ENCODE measurements at regions of chr1 and their contacts with region 1.

Region 1: DNA sequence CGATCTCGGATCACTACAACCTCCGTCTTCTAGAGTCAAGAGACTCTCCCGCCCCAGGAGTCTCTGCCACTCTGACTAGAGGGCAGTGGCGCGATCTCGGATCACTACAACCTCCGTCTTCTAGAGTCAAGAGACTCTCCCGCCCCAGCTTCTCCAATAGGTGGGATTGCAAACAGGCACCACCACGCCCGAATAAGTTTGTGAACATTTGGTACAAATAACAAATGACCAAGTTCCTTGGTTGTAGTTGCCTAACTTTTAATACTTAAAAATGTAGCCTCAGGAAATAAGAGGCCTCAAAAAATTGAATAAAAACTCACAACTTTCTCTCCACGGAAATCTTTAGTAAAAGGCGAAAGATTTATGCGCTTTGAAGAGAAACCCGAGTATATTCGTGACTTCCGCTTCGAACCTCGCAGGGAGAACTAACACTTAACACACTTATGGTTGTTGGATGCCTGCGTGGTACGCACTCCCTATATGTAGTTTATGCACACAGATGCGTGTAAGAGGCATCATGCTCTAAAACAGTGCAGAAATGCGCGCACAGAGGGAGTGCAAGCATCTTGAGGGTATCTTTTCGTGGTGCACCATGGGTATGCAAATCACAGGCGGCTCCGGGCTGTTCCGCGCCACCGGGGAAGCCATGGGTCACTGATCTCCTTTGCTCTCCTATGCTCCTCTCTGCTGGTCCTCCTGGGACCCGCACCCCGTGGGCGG is 11.4 kb downstream of the BTBD19 start:
- DNase-seq: peak; percentile 82
- H3K4me3 ChIP-seq: peak overlapping the region; percentile 5 to 62 (median 17)
- H3K27ac ChIP-seq: peak overlapping the region; percentile 91
- H3K4me1 ChIP-seq: peaks cover 10% of the 10 kb centered on the region
- H3K27me3 ChIP-seq: no peaks in the 10 kb centered on the region
- CTCF ChIP-seq: no peak
- POLR2A ChIP-seq: peak; percentile 100

Region 2: GRCh38 chr1:44730741-44731512 is 88.8 kb before region 1 on chr1 and contains the start of gene RNU5D-1:
- CTCF ChIA-PET with region 1: interaction called, 5 read pairs
- POLR2A ChIA-PET with region 1: interaction called, 6 read pairs
- dilution Hi-C with region 1: no loop called
- intact Hi-C with region 1: loop called (anchors 1 kb)
- DNase-seq: peak; percentile 97
- H3K4me3 ChIP-seq: no peak within 1 kb of the TSS
- H3K27ac ChIP-seq: peak within 1 kb of the TSS; percentile 89
- H3K4me1 ChIP-seq: peaks cover 2% of the 10 kb centered on the region
- H3K27me3 ChIP-seq: no peaks in the 10 kb centered on the region
- CTCF ChIP-seq: peak; percentile 77 to 84
- POLR2A ChIP-seq: peak; percentile 100
- total RNA-seq, gene RNU5D-1: not detected in 2 replicates

Region 3: DNA sequence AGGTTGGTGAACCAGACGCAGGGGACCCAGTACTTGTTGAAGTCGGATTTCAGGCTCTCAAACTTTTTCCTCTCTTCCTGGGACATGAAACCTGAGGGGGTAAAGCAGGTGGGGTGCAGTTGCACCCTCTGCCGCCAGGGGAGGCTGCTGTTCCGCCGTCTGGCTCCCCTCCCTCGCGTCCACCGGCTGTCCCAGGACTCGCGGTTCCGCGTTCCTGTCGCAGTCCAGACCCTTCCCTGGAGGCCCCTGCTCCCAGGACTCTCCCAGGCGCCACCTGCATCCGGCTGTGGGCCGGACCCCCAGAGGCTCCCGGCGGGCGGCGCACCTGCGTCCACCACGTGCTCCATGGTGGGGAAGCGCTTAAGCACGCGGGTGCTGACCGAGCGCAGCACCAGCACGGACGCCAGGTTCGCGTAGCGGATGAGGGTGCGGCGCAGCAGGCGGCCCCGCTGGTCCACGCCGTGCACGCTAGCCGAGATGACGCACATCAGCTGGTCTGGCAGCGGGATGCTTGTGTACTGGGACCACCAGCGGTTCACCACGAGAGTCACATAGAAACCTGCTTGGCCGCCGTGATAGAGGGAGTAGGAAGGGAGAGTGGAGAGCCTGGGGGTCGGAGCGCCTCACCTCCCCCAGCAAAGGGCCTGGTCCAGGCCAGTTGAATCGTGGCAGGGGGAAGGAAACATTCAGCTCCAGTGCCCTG is 33.5 kb before region 1 on chr1:
- CTCF ChIA-PET with region 1: interaction called, 12 read pairs
- POLR2A ChIA-PET with region 1: interaction called, 8 read pairs
- dilution Hi-C with region 1: no loop called
- intact Hi-C with region 1: loop called (anchors 1 kb)
- DNase-seq: peak; percentile 69
- H3K4me3 ChIP-seq: peak overlapping the region in 2 of 3 experiments; percentile 12 to 17
- H3K27ac ChIP-seq: no peak overlapping the region
- H3K4me1 ChIP-seq: peaks cover 10% of the 10 kb centered on the region
- H3K27me3 ChIP-seq: no peaks in the 10 kb centered on the region
- CTCF ChIP-seq: peak; percentile 98 to 99
- POLR2A ChIP-seq: no peak

Region 4: GRCh38 chr1:44792783-44793714 is 26.7 kb before region 1 on chr1:
- CTCF ChIA-PET with region 1: interaction called, 27 read pairs
- POLR2A ChIA-PET with region 1: interaction called, 9 read pairs
- dilution Hi-C with region 1: no loop called
- intact Hi-C with region 1: no loop called
- DNase-seq: no peak
- H3K4me3 ChIP-seq: no peak overlapping the region
- H3K27ac ChIP-seq: no peak overlapping the region
- H3K4me1 ChIP-seq: no peaks in the 10 kb centered on the region
- H3K27me3 ChIP-seq: no peaks in the 10 kb centered on the region
- CTCF ChIP-seq: no peak
- POLR2A ChIP-seq: no peak

Region 5: DNA sequence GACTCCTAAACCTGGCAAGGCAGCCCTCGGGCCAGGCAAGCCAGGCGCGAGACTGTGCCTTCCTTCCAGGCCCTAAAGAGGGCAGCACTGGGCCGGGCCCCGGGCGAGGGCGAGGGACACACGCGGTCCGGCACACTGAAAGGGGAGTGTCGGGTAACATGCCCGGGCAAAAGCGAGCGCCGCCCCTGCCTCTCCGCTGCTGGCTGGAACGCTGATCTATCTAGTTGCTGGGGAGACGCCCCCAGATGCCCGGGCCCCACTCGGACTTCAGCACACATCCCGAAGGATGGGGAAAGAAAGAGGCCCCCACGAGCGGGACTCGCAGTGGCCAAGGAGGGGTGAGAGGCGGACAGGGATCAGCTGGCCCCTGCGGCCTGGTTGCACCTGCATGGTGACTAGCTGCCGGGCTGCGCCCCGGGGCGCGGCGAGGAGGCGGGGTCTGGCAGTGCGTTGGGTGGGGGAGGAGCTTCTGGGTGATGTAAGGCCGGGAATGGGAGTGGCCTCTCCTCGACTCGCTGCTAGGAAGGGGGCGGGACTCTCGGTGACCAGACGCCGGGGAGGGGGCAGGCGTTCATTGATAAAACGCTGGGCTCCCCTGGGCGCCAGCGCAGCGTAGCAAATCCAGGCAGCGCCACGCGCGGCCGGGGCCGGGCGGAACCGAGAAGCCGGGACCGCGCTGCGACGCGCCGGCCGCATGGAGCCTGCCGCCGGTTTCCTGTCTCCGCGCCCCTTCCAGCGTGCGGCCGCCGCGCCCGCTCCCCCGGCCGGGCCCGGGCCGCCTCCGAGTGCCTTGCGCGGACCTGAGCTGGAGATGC is 19.8 kb before region 1 on chr1 and contains the start of gene PLK3:
- CTCF ChIA-PET with region 1: interaction called, 57 read pairs
- POLR2A ChIA-PET with region 1: interaction called, 48 read pairs
- dilution Hi-C with region 1: no loop called
- intact Hi-C with region 1: loop called (anchors 1 kb)
- DNase-seq: peak; percentile 98
- H3K4me3 ChIP-seq: peak within 1 kb of the TSS; percentile 68 to 75 (median 69)
- H3K27ac ChIP-seq: peak within 1 kb of the TSS; percentile 87
- H3K4me1 ChIP-seq: peaks cover 22% of the 10 kb centered on the region
- H3K27me3 ChIP-seq: no peaks in the 10 kb centered on the region
- CTCF ChIP-seq: peak; percentile 93 to 96
- POLR2A ChIP-seq: peak; percentile 100
- total RNA-seq, gene PLK3: 55.0 and 60.0 TPM in 2 replicates

Region 6: GRCh38 chr1:44807262-44808062 is 12.3 kb before region 1 on chr1 and contains the start of gene DYNLT4:
- CTCF ChIA-PET with region 1: interaction called, 10 read pairs
- POLR2A ChIA-PET with region 1: interaction called, 97 read pairs
- dilution Hi-C with region 1: no loop called
- intact Hi-C with region 1: loop called (anchors 1 kb)
- DNase-seq: peak; percentile 100
- H3K4me3 ChIP-seq: peak within 1 kb of the TSS in 2 of 3 experiments; percentile 6 to 25
- H3K27ac ChIP-seq: peak within 1 kb of the TSS; percentile 100
- H3K4me1 ChIP-seq: peaks cover 72% of the 10 kb centered on the region
- H3K27me3 ChIP-seq: no peaks in the 10 kb centered on the region
- CTCF ChIP-seq: no peak
- POLR2A ChIP-seq: peak; percentile 75
- total RNA-seq, gene DYNLT4: 0.62 and 1.1 TPM in 2 replicates

Region 7: GRCh38 chr1:44903011-44903680 is 83.4 kb after region 1 on chr1:
- CTCF ChIA-PET with region 1: no interaction called
- POLR2A ChIA-PET with region 1: no interaction called
- dilution Hi-C with region 1: no loop called
- intact Hi-C with region 1: no loop called
- DNase-seq: no peak
- H3K4me3 ChIP-seq: no peak overlapping the region
- H3K27ac ChIP-seq: no peak overlapping the region
- H3K4me1 ChIP-seq: no peaks in the 10 kb centered on the region
- H3K27me3 ChIP-seq: no peaks in the 10 kb centered on the region
- CTCF ChIP-seq: no peak
- POLR2A ChIP-seq: no peak